Activated CD4-positive, alpha-beta T cell treated with anti-CD3 and anti-CD28 coated beads, Interleukin-2, amount 10 ng/mL, durations not matched to agents 24 days and 14 days (primary cell): ENCODE measurements at regions of chr3 and their contacts with region 1.

Region 1: GRCh38 chr3:11643605-11644087 is at the start of gene VGLL4:
- DNase-seq: peak; percentile 91
- H3K4me3 Mint-ChIP-seq: peak within 1 kb of the TSS; percentile 99
- H3K27ac Mint-ChIP-seq: peak within 1 kb of the TSS; percentile 97
- H3K4me1 Mint-ChIP-seq: peaks cover 37% of the 10 kb centered on the region
- H3K27me3 Mint-ChIP-seq: peaks cover 13% of the 10 kb centered on the region
- total RNA-seq, gene VGLL4: 43.4 and 44.0 TPM in 2 replicates

Region 2: GRCh38 chr3:11288786-11289682 is 354.6 kb before region 1 on chr3:
- intact Hi-C with region 1: loop called (anchors 5 kb)
- DNase-seq: no peak
- H3K4me3 Mint-ChIP-seq: peak overlapping the region; percentile 51
- H3K27ac Mint-ChIP-seq: peak overlapping the region; percentile 90
- H3K4me1 Mint-ChIP-seq: peaks cover 44% of the 10 kb centered on the region
- H3K27me3 Mint-ChIP-seq: no peaks in the 10 kb centered on the region

Region 3: GRCh38 chr3:11582191-11582968 is 61.3 kb before region 1 on chr3:
- intact Hi-C with region 1: loop called (anchors 10 kb)
- DNase-seq: no peak
- H3K4me3 Mint-ChIP-seq: peak overlapping the region; percentile 69
- H3K27ac Mint-ChIP-seq: no peak overlapping the region
- H3K4me1 Mint-ChIP-seq: peaks cover 25% of the 10 kb centered on the region
- H3K27me3 Mint-ChIP-seq: no peaks in the 10 kb centered on the region

Region 4: GRCh38 chr3:11626084-11626463 is 17.6 kb before region 1 on chr3:
- intact Hi-C with region 1: loop called (anchors 1 kb)
- DNase-seq: peak; percentile 81
- H3K4me3 Mint-ChIP-seq: peak overlapping the region; percentile 57
- H3K27ac Mint-ChIP-seq: peak overlapping the region; percentile 77
- H3K4me1 Mint-ChIP-seq: peaks cover 56% of the 10 kb centered on the region
- H3K27me3 Mint-ChIP-seq: no peaks in the 10 kb centered on the region

Region 5: GRCh38 chr3:11803977-11804892 is 160.6 kb after region 1 on chr3:
- intact Hi-C with region 1: loop called (anchors 5 kb)
- DNase-seq: peak; percentile 82
- H3K4me3 Mint-ChIP-seq: no peak overlapping the region
- H3K27ac Mint-ChIP-seq: no peak overlapping the region
- H3K4me1 Mint-ChIP-seq: peaks cover 8% of the 10 kb centered on the region
- H3K27me3 Mint-ChIP-seq: no peaks in the 10 kb centered on the region